ENCODE measurements at regions of chr6 and their contacts with region 1.

Region 1: GRCh38 chr6:52995913-52996645 is 995 bp upstream of the GSTA4 start:
- DNase-seq: peak; percentile 82
- H3K4me3 Mint-ChIP-seq: peak overlapping the region; percentile 89
- H3K27ac Mint-ChIP-seq: peak overlapping the region; percentile 99
- H3K4me1 Mint-ChIP-seq: peaks cover 23% of the 10 kb centered on the region
- H3K27me3 Mint-ChIP-seq: no peaks in the 10 kb centered on the region
- CTCF ChIP-seq: no peak

Region 2: GRCh38 chr6:52815167-52816092 is 180.6 kb before region 1 on chr6:
- CTCF ChIA-PET with region 1: interaction called, 3 read pairs
- POLR2A ChIA-PET with region 1: interaction called, 6 read pairs
- intact Hi-C with region 1: loop called (anchors 1 kb)
- DNase-seq: peak; percentile 64
- H3K4me3 Mint-ChIP-seq: no peak overlapping the region
- H3K27ac Mint-ChIP-seq: no peak overlapping the region
- H3K4me1 Mint-ChIP-seq: peaks cover under 1% of the 10 kb centered on the region
- H3K27me3 Mint-ChIP-seq: no peaks in the 10 kb centered on the region
- CTCF ChIP-seq: peak; percentile 75

Region 3: GRCh38 chr6:52877168-52877567 is 118.9 kb before region 1 on chr6:
- CTCF ChIA-PET with region 1: interaction called, 28 read pairs
- POLR2A ChIA-PET with region 1: interaction called, 23 read pairs
- intact Hi-C with region 1: loop called (anchors 1 kb)
- DNase-seq: peak; percentile 61
- H3K4me3 Mint-ChIP-seq: no peak overlapping the region
- H3K27ac Mint-ChIP-seq: no peak overlapping the region
- H3K4me1 Mint-ChIP-seq: peaks cover 14% of the 10 kb centered on the region
- H3K27me3 Mint-ChIP-seq: peaks cover 46% of the 10 kb centered on the region
- CTCF ChIP-seq: no peak

Region 4: DNA sequence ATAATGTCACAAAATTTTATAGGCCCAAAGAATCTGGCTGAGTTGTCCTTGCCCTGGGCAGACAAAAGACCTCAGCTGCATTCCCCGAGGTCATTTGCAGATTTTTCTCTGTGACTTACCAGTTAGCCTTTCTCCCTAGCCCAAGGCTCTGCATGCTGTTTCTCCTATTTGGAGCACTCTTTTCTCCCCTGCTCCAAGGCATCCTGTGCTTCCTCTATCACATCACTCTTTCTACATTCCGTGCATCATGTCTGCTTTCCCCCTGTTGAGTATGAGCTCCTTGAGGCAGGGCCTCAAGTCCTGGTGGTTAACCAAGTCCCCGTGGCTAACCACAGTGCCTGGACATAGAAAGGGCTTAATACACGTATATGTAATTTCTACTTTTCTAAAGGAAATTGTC is 86.0 kb before region 1 on chr6:
- CTCF ChIA-PET with region 1: interaction called, 4 read pairs
- POLR2A ChIA-PET with region 1: interaction called, 16 read pairs
- intact Hi-C with region 1: loop called (anchors 5 kb)
- DNase-seq: no peak
- H3K4me3 Mint-ChIP-seq: no peak overlapping the region
- H3K27ac Mint-ChIP-seq: no peak overlapping the region
- H3K4me1 Mint-ChIP-seq: peaks cover 7% of the 10 kb centered on the region
- H3K27me3 Mint-ChIP-seq: no peaks in the 10 kb centered on the region
- CTCF ChIP-seq: no peak

Region 5: GRCh38 chr6:52929321-52930164 is 66.5 kb before region 1 on chr6:
- CTCF ChIA-PET with region 1: interaction called, 5 read pairs
- POLR2A ChIA-PET with region 1: interaction called, 28 read pairs
- intact Hi-C with region 1: no loop called
- DNase-seq: peak; percentile 93
- H3K4me3 Mint-ChIP-seq: peak overlapping the region; percentile 1
- H3K27ac Mint-ChIP-seq: peak overlapping the region; percentile 28
- H3K4me1 Mint-ChIP-seq: peaks cover 12% of the 10 kb centered on the region
- H3K27me3 Mint-ChIP-seq: no peaks in the 10 kb centered on the region
- CTCF ChIP-seq: no peak

Region 6: GRCh38 chr6:53064726-53065215 is 68.7 kb after region 1 on chr6:
- CTCF ChIA-PET with region 1: interaction called, 7 read pairs
- POLR2A ChIA-PET with region 1: interaction called, 29 read pairs
- intact Hi-C with region 1: no loop called
- DNase-seq: peak; percentile 98
- H3K4me3 Mint-ChIP-seq: peak overlapping the region; percentile 95
- H3K27ac Mint-ChIP-seq: peak overlapping the region; percentile 88
- H3K4me1 Mint-ChIP-seq: peaks cover 23% of the 10 kb centered on the region
- H3K27me3 Mint-ChIP-seq: no peaks in the 10 kb centered on the region
- CTCF ChIP-seq: no peak

Region 7: GRCh38 chr6:53192682-53193188 is 196.7 kb after region 1 on chr6:
- CTCF ChIA-PET with region 1: no interaction called
- POLR2A ChIA-PET with region 1: no interaction called
- intact Hi-C with region 1: no loop called
- DNase-seq: no peak
- H3K4me3 Mint-ChIP-seq: no peak overlapping the region
- H3K27ac Mint-ChIP-seq: no peak overlapping the region
- H3K4me1 Mint-ChIP-seq: no peaks in the 10 kb centered on the region
- H3K27me3 Mint-ChIP-seq: no peaks in the 10 kb centered on the region
- CTCF ChIP-seq: no peak